Panc1 (cell line): ENCODE measurements at regions of chr14 and their contacts with region 1.

Region 1: DNA sequence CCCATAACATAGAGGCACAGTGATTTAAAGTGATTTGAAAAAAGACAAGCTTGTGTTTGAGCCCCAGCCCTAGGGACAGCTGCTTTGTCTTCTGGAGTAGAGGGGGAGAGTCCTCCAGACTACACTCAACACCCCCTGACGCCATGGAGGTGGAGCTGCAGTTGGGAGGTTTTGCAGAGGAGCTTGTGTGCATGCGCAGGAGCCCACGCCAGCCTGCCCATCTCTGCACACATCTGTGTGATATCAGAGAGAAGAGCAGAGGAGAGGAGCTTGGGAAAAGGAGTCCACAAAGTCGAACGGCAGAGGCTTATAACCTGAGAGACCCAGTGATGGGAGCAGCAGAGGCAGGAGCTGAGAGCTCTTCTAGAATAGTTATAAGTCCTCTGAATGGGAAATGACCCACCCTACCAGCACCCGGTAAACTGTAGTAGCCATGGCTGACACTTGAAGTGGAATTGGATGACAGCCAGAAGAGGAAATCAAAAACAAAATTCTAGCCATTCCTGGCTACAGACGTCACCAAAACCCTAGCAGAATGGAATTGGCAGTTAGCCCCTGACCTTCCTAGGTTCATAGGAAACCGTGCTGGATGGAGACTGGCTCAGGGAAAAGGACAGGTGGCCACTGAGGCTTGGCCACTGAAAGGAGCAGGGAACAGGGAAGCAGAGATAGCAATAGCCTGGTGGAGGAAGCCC is 185.1 kb upstream of the VASH1 start:
- DNase-seq: no peak
- ATAC-seq: no peak
- H3K4me3 ChIP-seq: no peak overlapping the region
- H3K27ac ChIP-seq: no peak overlapping the region
- H3K4me1 ChIP-seq: no peaks in the 10 kb centered on the region
- H3K27me3 ChIP-seq: no peaks in the 10 kb centered on the region; the same call in 1 of the 2 replicates
- CTCF ChIP-seq: no peak

Region 2: GRCh38 chr14:77260631-77261030 is 684.4 kb after region 1 on chr14:
- CTCF ChIA-PET with region 1: no interaction called
- POLR2A ChIA-PET with region 1: interaction called, 12 read pairs
- in situ Hi-C with region 1: no loop called
- intact Hi-C with region 1: no loop called
- DNase-seq: no peak
- ATAC-seq: no peak
- H3K4me3 ChIP-seq: no peak overlapping the region
- H3K27ac ChIP-seq: no peak overlapping the region
- H3K4me1 ChIP-seq: no peaks in the 10 kb centered on the region
- H3K27me3 ChIP-seq: no peaks in the 10 kb centered on the region
- CTCF ChIP-seq: no peak